Heart left ventricle (tissue), 16 donors: ENCODE measurements at regions of chr9 and their contacts with region 1.

Region 1: GRCh38 chr9:131046581-131047202 is 37.7 kb downstream of the LAMC3 start:
- DNase-seq: peak; percentile 42 to 79 (median 64)
- ATAC-seq: peak; percentile 58 to 92 (median 85)
- H3K4me3 ChIP-seq: peak overlapping the region in 1 of 12 donors; percentile 1
- H3K27ac ChIP-seq: no peak overlapping the region
- H3K4me1 ChIP-seq: peaks cover 0 to 6% (median 0%) of the 10 kb centered on the region in 12 donors
- H3K27me3 ChIP-seq: no peaks in the 10 kb centered on the region
- CTCF ChIP-seq: peak; percentile 90 to 97 (median 92)
- POLR2A ChIP-seq: peak in 1 of 2 donors; percentile 17

Region 2: DNA sequence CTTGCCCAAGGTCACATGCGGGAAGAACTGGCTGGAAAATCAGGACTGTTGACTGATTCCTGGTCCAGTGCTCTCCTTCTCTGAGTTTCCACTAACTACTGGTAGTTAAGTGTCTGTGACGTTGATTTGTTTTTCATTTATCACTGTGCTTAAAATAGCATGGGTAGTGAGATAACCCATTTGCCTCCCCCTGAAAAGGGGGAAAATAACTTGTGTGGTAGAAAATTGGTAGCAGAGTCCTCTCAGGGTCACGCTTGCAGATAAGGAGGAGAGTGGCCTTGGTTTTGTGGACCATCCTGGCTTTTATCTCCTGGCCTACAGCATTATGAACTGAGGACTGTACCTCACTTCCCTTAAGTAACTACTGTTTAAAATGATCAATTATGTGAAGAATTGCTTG is 456.4 kb before region 1 on chr9:
- intact Hi-C with region 1: no loop called
- DNase-seq: peak in 1 of 5 donors; percentile 34
- ATAC-seq: peak; percentile 68 to 92 (median 88)
- H3K4me3 ChIP-seq: no peak overlapping the region
- H3K27ac ChIP-seq: peak overlapping the region in 9 of 12 donors; percentile 28 to 89 (median 66)
- H3K4me1 ChIP-seq: peaks cover 0 to 34% (median 17%) of the 10 kb centered on the region in 12 donors
- H3K27me3 ChIP-seq: no peaks in the 10 kb centered on the region
- CTCF ChIP-seq: no peak
- POLR2A ChIP-seq: no peak

Region 3: DNA sequence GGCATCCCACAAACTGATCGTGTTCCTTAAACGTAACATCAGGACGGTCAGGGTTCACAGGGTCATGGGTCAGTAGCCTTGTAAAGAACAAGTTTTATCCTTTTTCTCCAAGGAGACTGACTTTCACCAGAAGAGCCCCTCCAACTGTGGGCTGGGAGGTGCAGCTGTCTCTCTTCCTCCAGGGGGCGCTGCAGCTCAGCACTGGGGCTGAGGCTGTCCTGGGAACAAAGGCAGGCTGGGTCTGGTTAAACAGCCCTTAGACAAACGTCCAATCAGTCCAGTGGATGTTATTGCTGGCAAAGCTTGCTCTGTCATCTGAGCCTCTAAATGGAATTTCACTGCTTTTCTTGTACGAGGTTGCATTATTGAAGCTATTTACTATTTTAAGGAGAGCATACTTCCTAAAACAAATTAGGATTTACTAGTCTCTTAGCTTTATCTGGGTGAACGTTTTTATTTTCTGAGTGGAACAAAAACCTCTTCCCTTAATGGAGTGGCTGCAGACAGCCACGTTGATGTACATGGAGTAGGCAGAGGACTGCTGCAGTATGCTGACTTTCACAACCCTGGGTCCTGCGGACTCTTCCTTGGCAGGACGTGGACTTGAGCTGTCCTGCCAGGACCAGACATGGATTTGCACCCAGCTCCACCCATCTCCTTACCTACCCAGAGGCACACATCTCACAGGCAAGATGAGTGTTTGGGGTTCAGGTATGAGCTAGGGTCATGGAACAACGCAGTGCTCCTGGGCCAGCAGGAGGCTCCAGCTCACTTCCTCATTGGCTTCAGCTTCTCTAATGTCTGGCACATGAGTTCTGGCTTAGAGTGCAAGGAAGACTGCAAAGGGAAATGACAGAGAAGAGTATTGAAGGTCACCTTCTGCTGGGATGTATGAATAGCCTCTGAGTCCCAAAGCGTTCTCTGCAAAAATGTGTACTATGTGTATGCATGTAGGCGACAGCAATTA is 345.4 kb before region 1 on chr9:
- intact Hi-C with region 1: loop called (anchors 2 to 10 kb)
- DNase-seq: peak; percentile 80 to 89 (median 82)
- ATAC-seq: peak; percentile 90 to 96 (median 92)
- H3K4me3 ChIP-seq: no peak overlapping the region
- H3K27ac ChIP-seq: peak overlapping the region in 4 of 12 donors; percentile 3 to 50 (median 15)
- H3K4me1 ChIP-seq: peaks cover 0 to 17% (median 8%) of the 10 kb centered on the region in 12 donors
- H3K27me3 ChIP-seq: no peaks in the 10 kb centered on the region
- CTCF ChIP-seq: peak; percentile 90 to 97 (median 93)
- POLR2A ChIP-seq: no peak

Region 4: DNA sequence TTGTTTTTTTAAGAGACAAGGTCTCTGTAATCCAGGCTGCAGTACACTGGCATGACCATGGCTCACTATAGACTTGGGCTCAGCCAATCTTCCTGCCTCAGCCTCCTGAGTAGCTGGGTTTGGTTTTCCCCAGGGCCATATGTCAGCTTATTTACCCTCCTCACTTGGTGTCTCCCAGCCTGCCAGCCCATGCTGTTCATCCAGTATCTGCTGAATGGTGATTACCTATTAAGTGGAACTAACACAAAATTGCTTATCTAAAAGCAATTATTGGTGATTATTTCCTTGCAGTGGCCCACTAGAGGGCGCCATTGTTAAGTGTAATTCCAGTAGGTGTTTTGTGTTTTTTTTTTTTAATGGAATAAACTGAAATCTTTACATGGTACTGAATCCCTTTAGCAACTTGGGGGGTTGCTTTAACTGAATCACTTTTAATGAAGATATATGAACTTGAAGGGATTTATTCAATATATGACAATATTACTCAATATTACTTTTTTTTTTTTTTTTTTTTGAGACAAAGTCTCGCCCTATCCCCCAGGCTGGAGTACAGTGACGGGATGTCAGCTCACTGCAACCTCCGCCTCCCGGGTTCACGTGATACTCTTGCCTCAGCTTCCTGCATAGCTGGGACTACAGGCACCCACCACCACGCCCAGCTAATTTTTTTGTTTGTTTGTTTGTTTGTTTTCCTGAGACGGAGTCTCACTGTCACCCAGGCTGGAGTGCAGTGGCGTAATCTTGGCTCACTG is 339.3 kb before region 1 on chr9:
- intact Hi-C with region 1: loop called in 8 of 10 experiments (anchors 5 to 10 kb)
- DNase-seq: peak in 3 of 5 donors; percentile 61 to 77 (median 71)
- ATAC-seq: peak in 1 of 4 donors; percentile 27
- H3K4me3 ChIP-seq: no peak overlapping the region
- H3K27ac ChIP-seq: no peak overlapping the region
- H3K4me1 ChIP-seq: peaks cover 0 to 9% (median 0%) of the 10 kb centered on the region in 12 donors
- H3K27me3 ChIP-seq: no peaks in the 10 kb centered on the region
- CTCF ChIP-seq: peak; percentile 65 to 85 (median 82)
- POLR2A ChIP-seq: no peak

Region 5: DNA sequence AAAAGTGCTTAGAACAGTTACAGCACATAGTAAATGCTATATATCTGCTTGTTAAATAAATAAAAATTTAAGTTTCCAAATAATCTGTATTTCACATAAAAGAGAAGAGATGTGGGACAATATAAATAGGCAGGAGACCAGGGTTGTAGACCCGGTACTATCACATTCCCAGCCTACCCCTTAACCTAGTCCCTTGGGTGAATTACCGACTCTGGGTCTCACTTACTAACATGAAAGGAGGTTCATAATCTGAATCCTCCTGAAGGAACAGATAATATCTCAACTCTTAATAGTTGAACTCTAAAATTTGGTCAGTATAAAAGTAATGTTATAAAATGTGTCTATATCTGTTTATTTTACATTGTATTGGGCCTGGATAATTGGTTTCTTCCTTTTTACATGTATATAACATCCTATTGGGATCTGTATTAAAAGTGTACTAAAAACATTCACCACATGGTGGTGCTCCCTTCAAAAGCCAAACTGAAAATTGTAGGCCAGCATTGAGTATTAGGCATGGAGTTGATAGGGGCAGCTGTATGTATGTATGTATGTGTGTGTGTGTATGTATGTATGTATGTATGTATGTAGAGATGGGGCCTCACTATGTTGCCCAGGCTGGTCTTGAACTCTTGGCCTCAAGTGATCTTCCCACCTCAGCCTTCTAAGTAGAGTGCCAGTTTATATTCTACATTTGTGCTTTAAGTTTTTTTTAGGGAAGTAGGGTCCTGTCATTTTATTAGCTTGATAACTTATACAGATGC is 275.8 kb before region 1 on chr9:
- intact Hi-C with region 1: loop called in 1 of 10 experiments (anchors 5 kb)
- DNase-seq: no peak
- ATAC-seq: peak; percentile 38 to 77 (median 76)
- H3K4me3 ChIP-seq: no peak overlapping the region
- H3K27ac ChIP-seq: no peak overlapping the region
- H3K4me1 ChIP-seq: peaks cover 0 to 36% (median 20%) of the 10 kb centered on the region in 12 donors
- H3K27me3 ChIP-seq: no peaks in the 10 kb centered on the region
- CTCF ChIP-seq: peak; percentile 49 to 80 (median 68)
- POLR2A ChIP-seq: peak in 1 of 2 donors; percentile 25

Region 6: GRCh38 chr9:130866474-130866965 is 180.2 kb before region 1 on chr9:
- intact Hi-C with region 1: loop called in 7 of 10 experiments (anchors 1 to 10 kb)
- DNase-seq: peak in 4 of 5 donors; percentile 61 to 72 (median 66)
- ATAC-seq: peak; percentile 29 to 50 (median 38)
- H3K4me3 ChIP-seq: no peak overlapping the region
- H3K27ac ChIP-seq: peak overlapping the region in 1 of 12 donors; percentile 20
- H3K4me1 ChIP-seq: peaks cover 3 to 55% (median 28%) of the 10 kb centered on the region in 12 donors
- H3K27me3 ChIP-seq: no peaks in the 10 kb centered on the region
- CTCF ChIP-seq: peak; percentile 66 to 86 (median 79)
- POLR2A ChIP-seq: no peak

Region 7: DNA sequence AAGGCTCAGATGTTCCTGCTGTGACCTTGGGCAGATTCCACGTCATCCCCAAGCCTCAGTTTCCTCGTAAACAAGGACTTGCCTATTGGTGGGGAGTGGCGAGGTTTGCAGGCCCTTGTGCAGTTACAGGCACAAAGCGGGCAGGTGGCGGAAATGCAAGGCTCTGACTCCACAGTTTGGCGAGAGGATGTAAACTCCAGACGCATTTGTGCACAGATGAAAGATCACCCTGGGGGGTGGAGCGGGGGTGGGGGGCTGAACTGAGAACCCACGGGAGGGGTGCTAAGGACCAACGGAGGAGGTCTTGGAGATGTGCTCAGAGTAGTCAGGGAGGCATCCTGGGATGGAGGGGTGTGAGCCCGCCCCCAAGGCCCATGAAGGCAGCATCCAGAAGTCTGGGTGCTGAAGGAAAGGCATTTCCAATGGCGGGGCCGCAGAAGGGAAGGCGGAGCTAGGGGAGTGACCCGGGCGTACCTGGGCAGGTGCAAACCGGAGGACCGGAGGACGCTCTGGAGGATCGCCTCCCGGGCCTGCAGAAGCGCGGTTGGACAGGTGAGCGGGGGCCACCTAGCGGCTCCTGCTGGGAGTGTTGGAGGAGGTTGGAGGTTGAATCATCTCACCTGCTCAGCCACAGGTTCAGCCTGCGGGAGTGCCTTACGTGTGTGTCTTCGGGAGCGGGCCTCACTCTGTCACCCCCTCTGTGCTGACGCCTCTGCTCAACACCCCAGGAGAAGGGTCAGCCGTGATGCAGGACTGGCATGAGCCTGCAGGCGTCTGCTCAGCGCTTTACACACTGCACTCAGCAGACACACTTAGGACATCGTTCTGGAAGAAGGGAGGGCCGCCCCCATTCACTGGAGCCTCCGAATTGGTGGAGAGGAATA is 105.8 kb before region 1 on chr9:
- intact Hi-C with region 1: loop called in 1 of 10 experiments (anchors 5 kb)
- DNase-seq: peak in 4 of 5 donors; percentile 51 to 64 (median 60)
- ATAC-seq: peak; percentile 59 to 78 (median 68)
- H3K4me3 ChIP-seq: no peak overlapping the region
- H3K27ac ChIP-seq: no peak overlapping the region
- H3K4me1 ChIP-seq: peaks cover 0 to 30% (median 16%) of the 10 kb centered on the region in 12 donors
- H3K27me3 ChIP-seq: peaks cover 37 to 71% (median 52%) of the 10 kb centered on the region in 9 donors
- CTCF ChIP-seq: peak; percentile 75 to 89 (median 80)
- POLR2A ChIP-seq: peak in 1 of 2 donors; percentile 36

Region 8: GRCh38 chr9:131111186-131111853 is 64.6 kb after region 1 on chr9:
- intact Hi-C with region 1: no loop called
- DNase-seq: no peak
- ATAC-seq: no peak
- H3K4me3 ChIP-seq: no peak overlapping the region
- H3K27ac ChIP-seq: peak overlapping the region in 1 of 12 donors; percentile 16
- H3K4me1 ChIP-seq: peaks cover 0 to 35% (median 11%) of the 10 kb centered on the region in 12 donors
- H3K27me3 ChIP-seq: no peaks in the 10 kb centered on the region
- CTCF ChIP-seq: no peak
- POLR2A ChIP-seq: no peak

Region 9: DNA sequence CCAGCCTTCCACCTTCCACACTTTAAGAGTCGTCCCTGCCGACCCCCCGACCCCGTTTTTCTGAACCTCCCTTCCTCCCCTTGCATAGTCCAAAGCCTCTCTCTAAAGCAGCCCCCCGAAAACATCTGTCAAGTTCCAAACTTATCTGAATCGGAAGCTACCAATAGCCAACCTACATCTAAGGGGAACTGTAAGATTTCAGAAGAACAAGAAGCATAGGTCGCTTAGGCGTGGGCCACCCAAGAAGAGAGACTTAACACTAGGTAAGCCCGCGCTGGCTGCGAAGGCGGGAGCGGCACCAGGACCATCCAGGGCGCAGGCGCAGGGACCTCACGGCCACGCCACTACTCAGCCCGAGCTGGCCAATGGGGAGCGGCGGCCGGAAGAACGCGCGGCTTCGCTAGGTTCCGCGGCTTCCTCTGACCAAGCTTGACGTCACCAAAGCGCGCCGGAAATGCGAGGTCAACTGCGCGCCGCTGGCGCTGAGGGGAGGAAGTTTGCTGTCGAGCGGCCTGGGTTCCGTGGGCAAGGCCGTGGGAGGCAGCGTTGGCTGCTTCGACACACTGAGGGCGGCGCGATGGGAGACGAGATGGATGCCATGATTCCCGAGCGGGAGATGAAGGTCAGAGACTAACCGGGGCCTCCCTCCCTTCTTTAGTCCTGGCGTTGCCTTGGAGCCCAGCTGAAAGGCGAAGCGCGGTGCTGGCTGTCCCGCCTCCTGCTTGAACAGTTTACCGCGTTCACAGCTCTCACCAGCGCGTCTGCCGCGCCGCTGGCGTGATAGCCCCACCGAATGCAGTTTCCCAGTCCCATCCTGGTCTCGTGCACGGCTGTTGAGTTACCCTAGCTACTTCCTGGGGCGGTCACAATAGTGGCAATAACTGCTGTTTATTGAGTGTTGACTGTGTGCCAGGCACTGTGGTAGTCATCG is 78.7 kb after region 1 on chr9 and contains the start of gene NUP214:
- intact Hi-C with region 1: loop called in 1 of 10 experiments (anchors 10 kb)
- DNase-seq: peak; percentile 99 to 100 (median 99)
- ATAC-seq: peak; percentile 99 to 100 (median 99)
- H3K4me3 ChIP-seq: peak within 1 kb of the TSS; percentile 55 to 99 (median 87)
- H3K27ac ChIP-seq: peak within 1 kb of the TSS; percentile 59 to 91 (median 80)
- H3K4me1 ChIP-seq: peaks cover 0 to 22% (median 15%) of the 10 kb centered on the region in 12 donors
- H3K27me3 ChIP-seq: no peaks in the 10 kb centered on the region
- CTCF ChIP-seq: no peak
- POLR2A ChIP-seq: peak in 1 of 2 donors; percentile 85
- total RNA-seq, gene NUP214: 19.2 to 45.1 (median 25.7) TPM